Left colon (tissue), 2 donors: ENCODE measurements at regions of chr20 and their contacts with region 1.

Region 1: GRCh38 chr20:63381807-63382322 is 20.7 kb upstream of the CHRNA4 start:
- DNase-seq: no peak
- ATAC-seq: no peak

Region 2: GRCh38 chr20:63309261-63310071 is 72.4 kb before region 1 on chr20:
- intact Hi-C with region 1: loop called in 1 of 2 experiments (anchors 5 kb)
- DNase-seq: no peak
- ATAC-seq: peak; percentile 59